Left ventricle myocardium superior (tissue), 1 donor: ENCODE measurements at regions of chr9 and their contacts with region 1.

Region 1: DNA sequence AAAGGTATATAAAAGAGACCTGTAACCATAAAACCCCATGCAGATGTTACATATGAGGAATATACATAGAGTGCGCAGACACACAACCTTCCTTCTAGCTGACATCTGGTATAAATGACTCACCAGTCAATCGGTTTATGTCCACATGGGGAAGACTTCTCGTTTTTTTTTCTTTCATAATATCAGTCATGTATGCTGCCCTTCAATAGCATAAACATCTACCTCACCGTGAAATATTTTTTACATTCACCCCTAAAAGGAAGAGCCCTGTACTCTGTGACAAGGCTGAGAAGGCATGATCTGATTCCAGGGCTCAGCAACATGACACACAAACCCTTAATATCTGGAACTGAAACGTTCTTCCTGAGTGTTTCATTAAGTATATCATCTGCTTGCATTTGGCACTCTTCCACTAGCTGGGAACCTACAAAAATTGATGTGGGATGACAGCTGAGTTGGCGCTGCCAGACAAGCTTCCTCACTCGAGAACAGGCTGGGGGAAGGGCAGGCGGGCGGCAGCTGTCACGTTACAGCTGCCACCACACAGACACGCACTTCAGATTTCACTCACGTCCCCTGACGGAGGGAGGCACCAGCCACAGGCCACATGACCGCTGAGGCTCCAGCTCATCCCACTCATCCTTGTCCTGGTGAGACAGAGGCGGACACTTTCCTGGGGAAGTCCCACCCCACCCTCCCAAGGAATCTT is 74.2 kb downstream of the SHB start:
- DNase-seq: peak; percentile 86
- ATAC-seq: peak; percentile 90

Region 2: GRCh38 chr9:37938121-37938891 is 56.5 kb before region 1 on chr9:
- intact Hi-C with region 1: loop called (anchors 10 kb)
- DNase-seq: peak; percentile 56
- ATAC-seq: peak; percentile 63